ENCODE measurements at regions of chr5 and their contacts with region 1.

Region 1: DNA sequence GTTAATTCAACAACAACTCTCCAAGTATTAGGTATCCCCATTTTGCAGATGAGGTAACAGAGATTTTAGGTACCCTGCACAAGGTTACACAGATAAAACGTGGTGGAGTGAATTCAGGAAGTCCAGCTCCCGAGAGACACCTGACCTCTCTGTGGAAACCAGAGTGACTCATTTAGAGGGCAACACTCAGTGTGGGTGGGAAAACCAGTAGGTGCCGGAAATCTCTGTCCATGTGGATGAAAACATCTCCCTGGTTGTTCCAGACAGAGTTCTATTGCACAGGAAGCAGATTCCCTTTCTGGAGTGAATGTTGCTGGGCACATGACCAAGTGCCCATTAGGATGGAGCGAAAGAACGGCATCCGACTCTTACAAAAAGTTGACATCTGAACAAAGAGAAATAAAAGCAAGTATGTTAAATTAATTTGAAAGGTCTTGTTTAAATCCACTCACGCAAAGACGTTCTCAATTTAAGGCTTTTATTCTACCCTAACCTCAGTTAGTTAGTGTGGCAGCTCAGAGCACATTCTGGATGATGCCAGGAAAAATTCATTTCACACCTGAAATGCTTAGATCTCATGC is 391.9 kb upstream of the WWC1 start:
- DNase-seq: peak; percentile 73
- H3K4me3 ChIP-seq: no peak overlapping the region
- H3K27ac ChIP-seq: peak overlapping the region; percentile 97
- H3K4me1 ChIP-seq: peaks cover 92% of the 10 kb centered on the region
- H3K27me3 ChIP-seq: no peaks in the 10 kb centered on the region
- CTCF ChIP-seq: no peak

Region 2: GRCh38 chr5:167158588-167158987 is 741.0 kb before region 1 on chr5:
- CTCF ChIA-PET with region 1: no interaction called
- POLR2A ChIA-PET with region 1: no interaction called
- intact Hi-C with region 1: loop called (anchors 2 kb)
- DNase-seq: peak; percentile 78
- H3K4me3 ChIP-seq: no peak overlapping the region
- H3K27ac ChIP-seq: peak overlapping the region; percentile 92
- H3K4me1 ChIP-seq: peaks cover 49% of the 10 kb centered on the region
- H3K27me3 ChIP-seq: no peaks in the 10 kb centered on the region
- CTCF ChIP-seq: no peak

Region 3: GRCh38 chr5:167699434-167699833 is 200.1 kb before region 1 on chr5:
- CTCF ChIA-PET with region 1: no interaction called
- POLR2A ChIA-PET with region 1: no interaction called
- intact Hi-C with region 1: loop called (anchors 2 kb)
- DNase-seq: peak; percentile 97
- H3K4me3 ChIP-seq: no peak overlapping the region
- H3K27ac ChIP-seq: peak overlapping the region; percentile 69
- H3K4me1 ChIP-seq: peaks cover 61% of the 10 kb centered on the region
- H3K27me3 ChIP-seq: no peaks in the 10 kb centered on the region
- CTCF ChIP-seq: no peak

Region 4: DNA sequence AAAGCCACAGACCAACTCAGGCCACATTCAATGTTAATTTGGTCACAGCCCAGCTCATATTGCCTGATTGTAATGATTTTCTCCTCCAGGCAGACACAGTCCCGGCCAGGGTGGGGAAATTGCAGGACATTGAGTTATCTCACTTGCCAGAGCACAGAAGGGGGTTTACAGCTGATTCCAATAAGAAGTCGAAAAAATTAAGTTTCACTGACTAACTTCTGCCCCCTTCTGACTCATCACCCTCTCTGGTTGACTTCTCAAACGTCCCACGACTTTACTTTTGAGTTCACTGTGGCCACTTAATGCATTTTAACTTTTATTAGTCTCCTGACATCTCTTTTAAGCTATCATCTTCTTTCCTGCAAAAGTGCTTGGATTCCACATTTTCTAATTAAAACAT is 70.4 kb after region 1 on chr5:
- CTCF ChIA-PET with region 1: no interaction called
- POLR2A ChIA-PET with region 1: no interaction called
- intact Hi-C with region 1: loop called (anchors 2 kb)
- DNase-seq: peak; percentile 66
- H3K4me3 ChIP-seq: peak overlapping the region; percentile 0
- H3K27ac ChIP-seq: peak overlapping the region; percentile 70
- H3K4me1 ChIP-seq: peaks cover 81% of the 10 kb centered on the region
- H3K27me3 ChIP-seq: no peaks in the 10 kb centered on the region
- CTCF ChIP-seq: peak; percentile 46; the same call in 1 of the 2 replicates

Region 5: DNA sequence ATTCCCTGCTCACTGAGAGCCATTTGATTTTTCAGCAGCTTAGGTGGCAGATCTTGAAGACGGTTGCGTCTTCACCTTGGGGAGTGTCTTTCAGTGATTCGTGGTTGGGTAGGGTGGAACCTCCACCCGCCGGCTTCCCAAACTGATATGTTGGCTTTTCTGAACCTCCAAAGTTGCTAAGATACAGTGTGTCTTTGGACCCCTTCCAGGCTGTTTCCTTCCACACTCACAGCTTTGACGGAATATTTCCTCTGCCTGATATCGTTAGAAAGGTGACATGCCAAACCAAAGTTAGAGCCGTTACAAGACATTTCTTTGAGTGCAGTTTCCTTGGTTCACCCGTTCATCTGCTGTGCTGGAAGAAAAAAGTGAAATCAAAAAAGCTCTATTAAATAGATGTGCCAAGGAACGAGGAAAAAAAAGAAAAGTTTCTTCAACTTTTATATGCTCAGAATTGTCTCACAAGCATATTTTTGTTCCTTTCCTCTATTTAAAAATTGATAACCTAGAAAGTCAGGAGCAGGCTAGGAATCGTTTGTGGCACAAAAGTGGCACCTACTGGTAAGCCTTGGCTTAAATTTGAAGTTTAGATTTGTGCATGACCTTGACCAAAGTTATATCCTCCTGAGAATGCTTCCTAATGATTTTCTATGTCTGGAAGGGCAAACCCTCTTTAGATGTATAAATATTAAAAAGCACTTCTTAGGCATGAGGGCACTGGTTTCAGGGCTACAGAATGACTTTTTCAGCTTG is 121.1 kb after region 1 on chr5:
- CTCF ChIA-PET with region 1: no interaction called
- POLR2A ChIA-PET with region 1: interaction called, 7 read pairs
- intact Hi-C with region 1: loop called (anchors 1 kb)
- DNase-seq: peak; percentile 41
- H3K4me3 ChIP-seq: no peak overlapping the region
- H3K27ac ChIP-seq: peak overlapping the region; percentile 4
- H3K4me1 ChIP-seq: peaks cover 62% of the 10 kb centered on the region
- H3K27me3 ChIP-seq: no peaks in the 10 kb centered on the region
- CTCF ChIP-seq: peak; percentile 47

Region 6: GRCh38 chr5:168086104-168086610 is 186.6 kb after region 1 on chr5:
- CTCF ChIA-PET with region 1: no interaction called
- POLR2A ChIA-PET with region 1: no interaction called
- intact Hi-C with region 1: loop called (anchors 1 kb)
- DNase-seq: peak; percentile 95
- H3K4me3 ChIP-seq: no peak overlapping the region
- H3K27ac ChIP-seq: peak overlapping the region; percentile 96
- H3K4me1 ChIP-seq: peaks cover 52% of the 10 kb centered on the region
- H3K27me3 ChIP-seq: no peaks in the 10 kb centered on the region
- CTCF ChIP-seq: peak; percentile 44

Region 7: DNA sequence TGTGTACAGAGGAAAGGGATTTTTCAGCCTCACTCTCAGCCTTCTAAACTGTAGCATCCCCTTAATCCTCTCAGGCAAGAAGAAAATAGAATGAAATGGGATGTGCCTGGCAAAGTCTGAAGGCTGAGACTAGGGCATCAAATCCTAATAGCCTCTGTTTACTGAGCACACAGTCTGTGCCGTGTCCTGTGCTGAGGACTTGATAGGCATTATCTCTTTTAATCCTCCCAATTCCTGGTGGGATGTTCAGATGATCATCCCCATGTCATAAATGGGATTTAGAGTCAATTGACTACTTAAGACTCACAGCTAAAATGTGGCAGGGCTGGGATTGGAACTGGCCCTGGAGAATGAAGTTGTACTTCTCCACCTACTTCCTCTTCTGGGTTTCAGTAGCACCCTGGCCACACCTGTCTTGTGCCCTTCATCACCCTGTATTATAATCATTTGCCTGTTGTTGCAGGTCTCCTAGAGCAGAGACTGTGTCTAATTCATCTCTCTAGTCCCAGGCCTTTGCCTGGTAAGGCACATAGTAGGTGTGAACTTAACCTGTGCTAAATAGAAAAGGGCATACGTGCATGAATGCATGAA is 472.9 kb after region 1 on chr5:
- CTCF ChIA-PET with region 1: no interaction called
- POLR2A ChIA-PET with region 1: no interaction called
- intact Hi-C with region 1: no loop called
- DNase-seq: no peak
- H3K4me3 ChIP-seq: no peak overlapping the region
- H3K27ac ChIP-seq: no peak overlapping the region
- H3K4me1 ChIP-seq: no peaks in the 10 kb centered on the region
- H3K27me3 ChIP-seq: no peaks in the 10 kb centered on the region
- CTCF ChIP-seq: no peak

Measured in A673 (cell line).